Left ventricle myocardium superior (tissue), 1 donor: ENCODE measurements at regions of chr1 and their contacts with region 1.

Region 1: GRCh38 chr1:190578017-190578416 is 100.4 kb upstream of the BRINP3 start:
- DNase-seq: no peak
- ATAC-seq: no peak

Region 2: DNA sequence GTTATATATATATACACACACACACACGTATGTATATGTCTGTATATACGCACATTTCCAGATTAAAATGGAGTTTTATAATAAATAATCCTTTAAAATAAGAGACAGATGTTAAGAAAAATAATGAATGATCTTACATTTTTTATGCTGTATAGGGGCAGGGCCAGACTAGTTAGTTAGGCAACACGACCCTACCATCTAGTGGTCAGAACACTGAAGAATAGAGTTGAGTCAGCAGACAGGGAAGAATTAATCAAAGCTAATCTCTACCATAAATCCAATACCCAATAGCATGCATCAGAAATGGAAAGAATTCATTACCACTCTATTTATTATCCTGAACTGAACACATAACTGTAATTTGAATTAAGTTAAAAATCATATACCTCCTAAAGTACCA is 257.1 kb before region 1 on chr1:
- intact Hi-C with region 1: loop called (anchors 5 kb)
- DNase-seq: no peak
- ATAC-seq: no peak